Sigmoid colon (tissue), 7 donors: ENCODE measurements at regions of chr6 and their contacts with region 1.

Region 1: DNA sequence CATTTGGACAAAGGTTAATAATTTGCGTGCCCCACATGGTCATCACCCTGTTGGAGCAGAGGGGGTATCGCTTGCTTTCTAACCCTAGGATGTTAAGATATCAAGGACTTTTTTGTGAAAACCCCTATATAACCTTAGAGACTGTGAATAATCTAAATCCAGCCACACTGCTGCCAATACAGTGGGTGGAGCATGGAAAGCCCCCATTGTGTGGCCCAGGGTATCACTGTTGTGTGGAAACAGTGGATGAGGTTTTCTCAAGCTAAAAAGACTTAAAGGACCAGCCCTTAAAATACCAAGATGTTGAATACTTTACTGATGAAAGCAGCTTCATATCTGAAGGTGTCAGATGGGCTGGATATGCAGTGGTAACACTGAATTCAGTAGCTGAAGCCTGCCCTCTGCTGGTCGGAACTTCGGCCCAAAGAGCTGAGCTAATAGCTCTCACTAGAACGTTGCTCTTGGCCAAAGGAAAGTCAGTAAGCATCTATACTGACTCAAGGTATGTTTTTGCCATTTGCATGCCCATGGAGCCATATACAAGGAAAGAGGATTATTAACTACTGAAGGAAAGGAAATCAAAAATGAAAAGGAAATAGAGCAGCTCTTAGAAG is 695.2 kb downstream of the PHF3 start:
- DNase-seq: peak; percentile 70
- H3K4me3 ChIP-seq: no peak overlapping the region
- H3K27ac ChIP-seq: no peak overlapping the region
- H3K4me1 ChIP-seq: no peaks in the 10 kb centered on the region
- H3K27me3 ChIP-seq: no peaks in the 10 kb centered on the region
- CTCF ChIP-seq: peak in 3 of 4 experiments; percentile 19 to 60 (median 58)
- EP300 ChIP-seq: no peak
- POLR2A ChIP-seq: no peak

Region 2: DNA sequence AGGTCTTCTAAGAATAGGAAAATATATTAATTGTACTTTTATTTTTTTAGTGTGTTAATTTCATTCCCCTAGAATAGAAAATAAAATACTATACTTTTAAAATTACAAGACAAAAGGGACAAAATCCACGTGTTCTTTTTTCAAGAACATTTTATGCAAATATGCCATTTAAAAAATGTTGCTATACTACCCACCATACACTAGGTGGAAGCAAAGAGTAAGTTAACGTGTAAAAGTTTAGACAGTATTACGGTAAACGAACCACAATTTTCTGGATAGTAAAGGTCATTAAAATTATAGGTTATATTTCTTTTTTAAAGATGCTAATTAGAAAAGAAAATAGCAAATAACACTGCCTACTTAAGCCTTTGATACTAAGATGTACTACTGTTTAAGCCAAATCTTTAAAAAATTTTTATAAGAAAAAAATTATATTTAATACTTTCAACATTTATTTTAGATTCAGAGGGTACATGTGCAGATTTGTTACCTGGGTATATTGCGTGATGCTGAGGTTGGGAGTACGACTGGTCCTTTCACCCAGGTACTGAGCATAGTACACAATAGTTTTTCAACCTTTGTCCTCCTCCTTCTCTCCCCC is 407.6 kb before region 1 on chr6:
- intact Hi-C with region 1: loop called (anchors 2 kb)
- DNase-seq: no peak
- H3K4me3 ChIP-seq: no peak overlapping the region
- H3K27ac ChIP-seq: no peak overlapping the region
- H3K4me1 ChIP-seq: no peaks in the 10 kb centered on the region
- H3K27me3 ChIP-seq: no peaks in the 10 kb centered on the region
- CTCF ChIP-seq: peak in 3 of 4 experiments; percentile 35 to 49 (median 44)
- EP300 ChIP-seq: no peak
- POLR2A ChIP-seq: no peak

Region 3: GRCh38 chr6:64012351-64013001 is 318.3 kb before region 1 on chr6:
- intact Hi-C with region 1: loop called (anchors 5 kb)
- DNase-seq: no peak
- H3K4me3 ChIP-seq: no peak overlapping the region
- H3K27ac ChIP-seq: no peak overlapping the region
- H3K4me1 ChIP-seq: peaks cover 0 to 5% (median 0%) of the 10 kb centered on the region in 4 donors
- H3K27me3 ChIP-seq: no peaks in the 10 kb centered on the region
- CTCF ChIP-seq: peak in 2 of 4 experiments; percentile 30 to 59
- EP300 ChIP-seq: no peak
- POLR2A ChIP-seq: no peak

Region 4: DNA sequence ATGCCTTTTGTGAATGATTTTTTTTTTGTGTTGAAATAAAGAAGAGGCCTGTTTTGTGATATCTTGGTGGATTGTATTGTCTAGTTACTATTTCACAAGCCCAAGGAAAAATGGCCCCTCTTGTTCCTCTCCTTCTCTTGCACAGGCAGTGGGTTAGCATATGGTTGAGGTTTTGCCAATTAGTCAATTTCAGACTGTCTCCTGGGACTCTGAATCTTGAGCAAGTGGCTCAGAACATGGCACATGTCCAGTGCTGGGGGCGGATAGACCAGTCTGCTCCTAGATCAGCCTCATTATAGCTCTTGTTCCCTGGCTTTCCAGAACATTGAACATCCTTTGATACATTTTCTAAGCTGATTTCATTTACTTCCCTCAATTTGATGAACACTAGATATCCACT is 106.0 kb before region 1 on chr6:
- intact Hi-C with region 1: no loop called
- DNase-seq: no peak
- H3K4me3 ChIP-seq: no peak overlapping the region
- H3K27ac ChIP-seq: no peak overlapping the region
- H3K4me1 ChIP-seq: no peaks in the 10 kb centered on the region
- H3K27me3 ChIP-seq: no peaks in the 10 kb centered on the region
- CTCF ChIP-seq: no peak
- EP300 ChIP-seq: no peak
- POLR2A ChIP-seq: no peak